GM12878 (cell line): ENCODE measurements at regions of chr3 and their contacts with region 1.

Region 1: GRCh38 chr3:149603126-149604074 is 54.4 kb downstream of the WWTR1 start:
- DNase-seq: no peak
- ATAC-seq: no peak
- H3K4me3 ChIP-seq: no peak overlapping the region
- H3K27ac ChIP-seq: peak overlapping the region; percentile 12; the same call in 1 of the 2 replicates
- H3K4me1 ChIP-seq: peaks cover 28% of the 10 kb centered on the region
- H3K27me3 ChIP-seq: no peaks in the 10 kb centered on the region
- CTCF ChIP-seq: no peak
- EP300 ChIP-seq: peak; percentile 35 to 58; a peak in 1 of 4 replicates
- POLR2A ChIP-seq: no peak
- RAD21 ChIP-seq: no peak

Region 2: GRCh38 chr3:149575961-149576564 is 27.3 kb before region 1 on chr3:
- CTCF ChIA-PET with region 1: interaction called, 80 read pairs
- POLR2A ChIA-PET with region 1: interaction called, 87 read pairs
- RAD21 ChIA-PET with region 1: interaction called, 181 read pairs
- SMC1A ChIA-PET with region 1: interaction called, 505 read pairs
- in situ Hi-C with region 1: no loop called
- intact Hi-C with region 1: loop called (anchors 1 kb)
- DNase-seq: no peak
- ATAC-seq: peak; percentile 51
- H3K4me3 ChIP-seq: peak overlapping the region; percentile 10; the same call in 1 of the 2 replicates
- H3K27ac ChIP-seq: peak overlapping the region; percentile 70
- H3K4me1 ChIP-seq: peaks cover 59% of the 10 kb centered on the region
- H3K27me3 ChIP-seq: no peaks in the 10 kb centered on the region
- CTCF ChIP-seq: no peak
- EP300 ChIP-seq: 0 out of 4 replicates have a peak, but pooled peaks of 1 of the 2 experiments have one; percentile 35
- POLR2A ChIP-seq: no peak
- RAD21 ChIP-seq: no peak

Region 3: DNA sequence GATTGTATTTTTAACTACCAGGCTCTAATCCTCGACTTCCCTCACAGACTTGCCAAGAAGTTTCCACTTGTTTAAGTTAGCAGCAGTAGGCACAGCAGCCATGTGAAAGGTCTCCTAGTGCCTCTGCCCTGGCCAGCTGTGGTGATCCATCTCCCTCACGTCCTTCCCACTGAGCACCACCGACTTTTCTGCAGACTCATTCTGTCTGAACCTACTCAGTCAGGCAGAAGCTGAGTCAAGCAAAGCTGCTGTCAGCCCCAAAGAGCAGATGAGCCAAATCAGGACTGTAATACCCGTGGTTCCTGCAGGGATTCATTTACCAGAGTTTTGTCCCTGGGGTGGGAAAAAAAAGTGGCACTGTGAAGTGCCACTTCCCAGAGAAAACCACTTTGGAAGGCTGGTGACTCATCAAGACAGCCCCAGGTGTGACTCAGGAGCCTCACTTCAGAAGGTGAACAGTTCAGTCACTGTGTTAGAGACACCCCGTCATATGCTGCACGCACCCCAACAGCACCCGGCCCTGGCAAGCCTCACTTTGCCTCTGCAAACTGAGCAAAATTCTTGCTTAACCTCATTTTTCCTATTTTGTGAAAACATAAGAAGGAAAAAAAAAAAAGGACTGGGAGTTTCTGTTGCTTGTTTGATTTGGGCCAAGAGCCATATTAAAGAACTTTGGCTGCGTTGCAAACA is 21.6 kb before region 1 on chr3:
- CTCF ChIA-PET with region 1: interaction called, 87 read pairs
- POLR2A ChIA-PET with region 1: interaction called, 87 read pairs
- RAD21 ChIA-PET with region 1: interaction called, 117 read pairs
- SMC1A ChIA-PET with region 1: interaction called, 505 read pairs
- in situ Hi-C with region 1: no loop called
- intact Hi-C with region 1: loop called (anchors 1 kb)
- DNase-seq: no peak
- ATAC-seq: peak; percentile 57
- H3K4me3 ChIP-seq: peak overlapping the region; percentile 52; the same call in 1 of the 2 replicates
- H3K27ac ChIP-seq: peak overlapping the region; percentile 63
- H3K4me1 ChIP-seq: peaks cover 73% of the 10 kb centered on the region
- H3K27me3 ChIP-seq: no peaks in the 10 kb centered on the region
- CTCF ChIP-seq: no peak
- EP300 ChIP-seq: 0 out of 4 replicates have a peak, but pooled peaks of 1 of the 2 experiments have one; percentile 21
- POLR2A ChIP-seq: no peak
- RAD21 ChIP-seq: no peak

Region 4: GRCh38 chr3:149589332-149589731 is 14.1 kb before region 1 on chr3:
- CTCF ChIA-PET with region 1: interaction called, 87 read pairs
- POLR2A ChIA-PET with region 1: interaction called, 87 read pairs
- RAD21 ChIA-PET with region 1: interaction called, 77 read pairs
- SMC1A ChIA-PET with region 1: interaction called, 197 read pairs
- in situ Hi-C with region 1: no loop called
- intact Hi-C with region 1: loop called (anchors 1 kb)
- DNase-seq: no peak
- ATAC-seq: no peak
- H3K4me3 ChIP-seq: no peak overlapping the region
- H3K27ac ChIP-seq: no peak overlapping the region
- H3K4me1 ChIP-seq: peaks cover 24% of the 10 kb centered on the region
- H3K27me3 ChIP-seq: no peaks in the 10 kb centered on the region
- CTCF ChIP-seq: no peak
- EP300 ChIP-seq: no peak
- POLR2A ChIP-seq: no peak
- RAD21 ChIP-seq: no peak

Region 5: GRCh38 chr3:149646181-149646766 is 42.9 kb after region 1 on chr3:
- CTCF ChIA-PET with region 1: interaction called, 3 read pairs
- POLR2A ChIA-PET with region 1: interaction called, 4 read pairs
- RAD21 ChIA-PET with region 1: interaction called, 5 read pairs
- SMC1A ChIA-PET with region 1: interaction called, 16 read pairs
- in situ Hi-C with region 1: no loop called
- intact Hi-C with region 1: no loop called
- DNase-seq: no peak
- ATAC-seq: peak; percentile 51
- H3K4me3 ChIP-seq: no peak overlapping the region
- H3K27ac ChIP-seq: no peak overlapping the region
- H3K4me1 ChIP-seq: peaks cover 14% of the 10 kb centered on the region
- H3K27me3 ChIP-seq: no peaks in the 10 kb centered on the region
- CTCF ChIP-seq: no peak
- EP300 ChIP-seq: no peak
- POLR2A ChIP-seq: no peak
- RAD21 ChIP-seq: no peak